MCF 10A (cell line): ENCODE measurements at regions of chr18 and their contacts with region 1.

Region 1: GRCh38 chr18:24543805-24544498 is 83.5 kb downstream of the HRH4 start:
- DNase-seq: peak; percentile 61
- H3K4me3 Mint-ChIP-seq: no peak overlapping the region
- H3K27ac Mint-ChIP-seq: no peak overlapping the region
- H3K4me1 Mint-ChIP-seq: no peaks in the 10 kb centered on the region
- H3K27me3 Mint-ChIP-seq: no peaks in the 10 kb centered on the region
- CTCF ChIP-seq: peak; percentile 46

Region 2: DNA sequence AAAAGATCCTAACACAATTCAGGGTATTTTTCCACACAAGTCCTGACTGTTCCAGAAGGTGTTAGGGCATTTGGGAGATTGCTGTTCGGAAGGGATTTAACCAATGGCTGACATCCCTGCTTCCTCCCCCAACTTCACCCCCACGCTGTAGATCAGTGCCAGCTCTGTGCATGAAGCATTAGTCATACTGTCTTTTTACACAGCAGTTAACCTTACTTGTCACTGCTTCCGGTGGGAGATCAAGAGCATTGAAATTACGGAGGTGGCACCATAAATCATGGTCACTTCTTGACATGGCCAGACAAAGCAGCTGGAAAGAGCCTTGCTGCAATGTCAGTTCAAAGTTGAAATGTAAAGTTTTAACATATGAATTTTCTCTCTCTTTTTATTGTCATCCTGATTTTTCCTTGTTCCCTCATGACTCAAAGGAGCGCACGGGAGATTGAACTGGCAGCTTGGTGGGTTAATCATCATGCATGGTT is 13.3 kb before region 1 on chr18:
- CTCF ChIA-PET with region 1: interaction called, 23 read pairs
- POLR2A ChIA-PET with region 1: interaction called, 3 read pairs
- intact Hi-C with region 1: no loop called
- DNase-seq: peak; percentile 72
- H3K4me3 Mint-ChIP-seq: no peak overlapping the region
- H3K27ac Mint-ChIP-seq: no peak overlapping the region
- H3K4me1 Mint-ChIP-seq: peaks cover 9% of the 10 kb centered on the region
- H3K27me3 Mint-ChIP-seq: peaks cover 16% of the 10 kb centered on the region
- CTCF ChIP-seq: no peak

Region 3: DNA sequence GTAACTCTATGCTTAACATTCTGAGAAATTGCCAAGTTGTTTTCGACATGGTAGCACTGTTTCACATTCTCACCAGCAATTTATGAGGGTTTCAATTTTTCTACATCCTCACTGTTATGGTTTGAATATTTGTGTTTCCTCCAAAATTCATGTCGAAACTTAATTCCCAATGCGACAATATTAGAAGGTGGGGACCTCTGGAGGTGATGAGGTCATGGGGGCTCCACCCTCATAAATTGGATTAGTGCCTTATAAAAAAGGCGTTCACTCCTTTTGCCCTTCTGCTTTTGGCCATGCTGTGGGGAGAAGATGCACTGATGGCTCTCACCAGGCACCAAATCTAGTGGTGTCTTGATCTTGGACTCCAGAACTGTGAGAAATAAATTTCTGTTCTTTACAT is 26.8 kb after region 1 on chr18:
- CTCF ChIA-PET with region 1: interaction called, 11 read pairs
- POLR2A ChIA-PET with region 1: no interaction called
- intact Hi-C with region 1: no loop called
- DNase-seq: no peak
- H3K4me3 Mint-ChIP-seq: no peak overlapping the region
- H3K27ac Mint-ChIP-seq: no peak overlapping the region
- H3K4me1 Mint-ChIP-seq: peaks cover 7% of the 10 kb centered on the region
- H3K27me3 Mint-ChIP-seq: no peaks in the 10 kb centered on the region
- CTCF ChIP-seq: no peak

Region 4: DNA sequence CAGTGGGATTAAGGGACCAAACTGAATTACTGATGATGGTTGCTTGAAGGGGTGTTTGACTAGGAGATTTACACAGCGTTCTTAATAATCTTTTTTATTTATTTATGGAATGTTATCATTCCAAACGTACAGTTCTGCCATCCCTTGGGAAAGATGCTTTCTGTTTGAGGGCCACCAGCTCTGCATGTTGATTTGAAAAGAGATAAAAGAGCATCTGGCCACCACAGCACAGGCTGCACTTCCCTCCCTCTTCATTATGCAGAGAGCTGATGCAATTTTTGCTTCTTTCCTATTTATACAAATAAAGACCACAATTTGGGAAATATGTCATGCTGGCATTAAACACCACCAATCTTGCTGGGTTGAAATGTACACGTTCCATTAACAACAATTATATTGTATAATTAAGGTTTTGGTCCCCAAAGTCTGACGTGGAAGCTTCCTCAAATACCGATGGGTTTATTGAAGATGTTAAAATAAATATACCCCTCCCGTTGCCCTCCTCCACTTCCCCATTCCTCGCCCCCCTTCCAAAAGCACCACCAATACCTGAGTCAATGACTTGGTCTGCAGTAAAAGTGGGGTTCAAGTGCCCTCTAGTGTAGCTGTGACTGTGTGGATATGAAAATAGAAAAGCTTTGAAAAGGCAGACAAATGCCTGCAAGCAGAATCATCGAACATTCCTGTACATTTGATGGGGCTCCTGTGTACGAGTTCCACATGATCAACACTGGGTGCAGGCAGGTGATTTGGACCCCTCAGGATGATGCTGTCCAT is 128.4 kb after region 1 on chr18:
- CTCF ChIA-PET with region 1: interaction called, 3 read pairs
- POLR2A ChIA-PET with region 1: no interaction called
- intact Hi-C with region 1: loop called (anchors 5 kb)
- DNase-seq: no peak
- H3K4me3 Mint-ChIP-seq: no peak overlapping the region
- H3K27ac Mint-ChIP-seq: no peak overlapping the region
- H3K4me1 Mint-ChIP-seq: no peaks in the 10 kb centered on the region
- H3K27me3 Mint-ChIP-seq: peaks cover 28% of the 10 kb centered on the region
- CTCF ChIP-seq: no peak

Region 5: DNA sequence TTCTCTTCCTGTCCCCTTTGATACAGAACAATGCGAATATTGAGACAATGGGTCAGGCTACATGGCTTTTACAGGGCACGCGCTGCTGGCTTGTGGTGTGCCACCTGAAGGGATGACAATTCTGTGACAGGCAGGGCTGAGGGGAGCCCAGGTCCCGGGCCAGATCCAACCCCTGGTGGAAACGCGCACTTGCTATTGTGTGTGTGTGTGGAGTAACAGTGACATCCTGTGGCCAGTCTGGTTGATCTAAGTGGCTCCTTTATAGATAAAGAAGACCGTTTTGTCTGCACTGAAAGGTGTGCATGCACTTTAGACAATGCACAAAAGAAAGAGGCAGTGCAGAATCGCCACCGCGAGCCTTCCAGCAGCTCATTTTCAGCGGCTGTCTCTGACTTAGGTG is 190.1 kb after region 1 on chr18:
- CTCF ChIA-PET with region 1: interaction called, 215 read pairs
- POLR2A ChIA-PET with region 1: no interaction called
- intact Hi-C with region 1: no loop called
- DNase-seq: peak; percentile 15
- H3K4me3 Mint-ChIP-seq: no peak overlapping the region
- H3K27ac Mint-ChIP-seq: no peak overlapping the region
- H3K4me1 Mint-ChIP-seq: no peaks in the 10 kb centered on the region
- H3K27me3 Mint-ChIP-seq: peaks cover 14% of the 10 kb centered on the region
- CTCF ChIP-seq: no peak

Region 6: DNA sequence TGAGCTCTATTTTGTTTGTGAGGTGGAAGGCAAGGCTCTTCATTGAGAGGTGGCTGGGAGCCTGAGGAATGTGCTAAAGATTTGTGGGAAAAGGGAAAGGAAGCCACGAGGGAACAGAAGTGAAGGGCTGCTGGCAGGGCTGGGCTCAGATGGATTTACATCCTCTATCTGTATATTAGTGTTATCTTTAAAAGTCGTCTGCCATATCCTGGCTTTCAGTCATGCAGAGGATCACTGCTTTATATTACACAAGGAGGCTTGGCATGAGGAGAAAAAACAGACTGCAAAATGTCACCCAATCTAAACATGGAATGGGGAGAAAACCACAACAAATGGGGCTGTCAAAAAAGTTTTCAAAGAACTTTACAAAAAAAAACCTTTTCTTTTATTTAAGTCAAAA is 350.9 kb after region 1 on chr18:
- CTCF ChIA-PET with region 1: no interaction called
- POLR2A ChIA-PET with region 1: no interaction called
- intact Hi-C with region 1: no loop called
- DNase-seq: no peak
- H3K4me3 Mint-ChIP-seq: no peak overlapping the region
- H3K27ac Mint-ChIP-seq: no peak overlapping the region
- H3K4me1 Mint-ChIP-seq: no peaks in the 10 kb centered on the region
- H3K27me3 Mint-ChIP-seq: no peaks in the 10 kb centered on the region
- CTCF ChIP-seq: no peak